ENCODE measurements at regions of chr17 and their contacts with region 1.

Region 1: DNA sequence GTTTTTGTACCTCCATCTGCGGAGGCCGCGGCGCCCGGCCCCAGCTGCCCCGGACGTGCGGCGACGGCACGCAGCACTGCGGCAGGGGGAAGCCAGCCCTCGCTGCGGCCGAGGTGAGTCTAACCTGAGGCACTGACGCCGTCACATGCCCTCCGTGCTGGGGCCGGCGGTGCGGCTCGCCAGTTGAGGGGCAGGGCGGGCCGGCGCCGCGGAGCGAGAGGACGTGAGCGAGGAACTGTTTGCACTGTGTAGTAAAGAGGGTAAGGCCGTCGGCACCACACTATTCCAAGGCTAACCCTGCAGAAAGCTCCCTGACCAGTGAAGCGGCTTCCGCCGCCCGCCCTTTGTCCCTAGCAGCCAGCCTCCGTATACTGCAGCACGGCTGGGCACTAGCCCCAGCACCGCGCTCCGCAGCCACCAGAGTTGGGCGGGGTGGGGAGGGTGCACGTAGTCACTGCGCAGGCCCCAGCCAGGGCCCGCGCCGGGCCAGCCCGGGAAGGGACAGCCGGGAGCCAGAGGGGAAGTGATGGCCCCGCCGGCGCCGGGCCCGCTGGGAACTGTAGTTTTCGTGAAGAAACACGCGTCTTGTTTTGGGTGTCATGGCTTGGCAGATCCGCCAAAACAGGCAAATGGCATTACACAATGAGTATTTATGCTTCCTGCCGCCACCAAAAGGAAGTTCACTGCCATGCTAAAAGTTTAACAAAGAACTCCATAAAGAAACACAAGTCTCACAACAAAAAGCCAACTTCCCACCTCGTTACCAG is 580 bp upstream of the KANSL1 start:
- DNase-seq: peak; percentile 98 to 100 (median 98)
- ATAC-seq: peak; percentile 89 to 97 (median 91)
- H3K4me3 ChIP-seq: peak overlapping the region; percentile 81 to 90 (median 83)
- H3K27ac ChIP-seq: peak overlapping the region; percentile 95 to 99 (median 99)
- H3K4me1 ChIP-seq: peaks cover 0 to 39% (median 0%) of the 10 kb centered on the region in 4 donors
- H3K27me3 ChIP-seq: no peaks in the 10 kb centered on the region
- CTCF ChIP-seq: peak in 2 of 4 donors; percentile 4 to 12
- POLR2A ChIP-seq: peak; percentile 79

Region 2: GRCh38 chr17:46106966-46107644 is 86.7 kb before region 1 on chr17:
- intact Hi-C with region 1: no loop called
- DNase-seq: no peak
- ATAC-seq: peak; percentile 11 to 66 (median 22)
- H3K4me3 ChIP-seq: no peak overlapping the region
- H3K27ac ChIP-seq: peak overlapping the region in 1 of 3 donors; percentile 24
- H3K4me1 ChIP-seq: peaks cover 0 to 49% (median 21%) of the 10 kb centered on the region in 4 donors
- H3K27me3 ChIP-seq: no peaks in the 10 kb centered on the region
- CTCF ChIP-seq: no peak
- POLR2A ChIP-seq: no peak

Region 3: GRCh38 chr17:46270032-46270431 is 76.2 kb after region 1 on chr17:
- intact Hi-C with region 1: loop called in 1 of 2 experiments (anchors 10 kb)
- DNase-seq: no peak
- ATAC-seq: peak in 1 of 4 donors; percentile 5
- H3K4me3 ChIP-seq: no peak overlapping the region
- H3K27ac ChIP-seq: no peak overlapping the region
- H3K4me1 ChIP-seq: peaks cover 0 to 4% (median 0%) of the 10 kb centered on the region in 4 donors
- H3K27me3 ChIP-seq: no peaks in the 10 kb centered on the region
- CTCF ChIP-seq: no peak
- POLR2A ChIP-seq: no peak

Measured in right lobe of liver (tissue), 6 donors.